ENCODE measurements at regions of chr17 and their contacts with region 1.

Region 1: DNA sequence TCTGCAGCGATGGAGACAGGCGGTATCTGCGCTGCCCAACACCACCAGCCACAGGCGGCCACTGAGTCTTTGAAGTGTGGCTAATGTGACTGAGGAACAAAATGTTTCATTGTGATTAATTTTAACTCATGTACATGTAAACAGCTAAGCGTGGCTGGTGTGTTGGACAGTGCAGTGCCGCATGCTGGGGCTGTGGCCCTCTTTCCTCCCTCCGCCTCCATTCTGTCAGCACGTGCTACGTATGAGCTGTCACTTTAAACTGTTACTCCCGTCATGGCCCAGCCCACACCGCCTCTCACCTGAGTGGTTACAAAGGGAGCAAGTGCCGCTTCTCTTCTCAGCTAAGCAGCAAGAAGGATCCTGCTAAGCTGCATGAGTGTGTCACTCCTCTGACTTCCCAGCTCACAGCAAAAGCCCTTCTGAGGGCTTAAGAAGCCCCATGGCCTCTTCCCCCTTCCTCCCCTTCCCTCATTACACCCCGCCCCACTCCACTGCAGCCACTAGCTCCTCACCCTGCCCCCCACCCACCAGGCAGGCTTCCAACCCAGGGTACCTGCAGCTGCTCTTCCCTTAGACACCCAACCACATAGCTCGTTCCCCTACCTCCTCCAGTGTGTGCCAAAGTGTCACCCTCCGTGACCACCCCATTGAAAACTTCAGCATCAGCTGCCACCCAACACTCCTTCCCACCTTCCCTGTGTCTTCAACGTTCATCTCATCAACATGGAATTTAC is 15.0 kb downstream of the HASPIN start:
- DNase-seq: no peak
- H3K4me3 ChIP-seq: no peak overlapping the region
- H3K27ac ChIP-seq: no peak overlapping the region
- H3K4me1 ChIP-seq: peaks cover 5% of the 10 kb centered on the region
- H3K27me3 ChIP-seq: no peaks in the 10 kb centered on the region
- CTCF ChIP-seq: no peak
- EP300 ChIP-seq: no peak
- POLR2A ChIP-seq: no peak

Region 2: GRCh38 chr17:3802461-3803307 is 64.0 kb after region 1 on chr17:
- intact Hi-C with region 1: loop called in 1 of 4 experiments (anchors 5 kb)
- DNase-seq: peak; percentile 81 to 90 (median 86)
- H3K4me3 ChIP-seq: no peak overlapping the region
- H3K27ac ChIP-seq: peak overlapping the region; percentile 75 to 99
- H3K4me1 ChIP-seq: peaks cover 54% of the 10 kb centered on the region
- H3K27me3 ChIP-seq: no peaks in the 10 kb centered on the region
- CTCF ChIP-seq: peak in 1 of 3 donors; percentile 51
- EP300 ChIP-seq: peak; percentile 52
- POLR2A ChIP-seq: no peak

Region 3: GRCh38 chr17:3845621-3846441 is 107.1 kb after region 1 on chr17 and contains the start of gene NCBP3:
- intact Hi-C with region 1: loop called in 3 of 4 experiments (anchors 5 to 10 kb)
- DNase-seq: peak; percentile 86 to 93 (median 89)
- H3K4me3 ChIP-seq: peak within 1 kb of the TSS; percentile 100
- H3K27ac ChIP-seq: peak within 1 kb of the TSS; percentile 59 to 70
- H3K4me1 ChIP-seq: no peaks in the 10 kb centered on the region
- H3K27me3 ChIP-seq: no peaks in the 10 kb centered on the region
- CTCF ChIP-seq: peak; percentile 97 to 98 (median 98)
- EP300 ChIP-seq: no peak
- POLR2A ChIP-seq: peak; percentile 81
- total RNA-seq, gene NCBP3: 15.7 to 43.2 (median 37.6) TPM

Region 4: GRCh38 chr17:3852561-3852960 is 113.8 kb after region 1 on chr17:
- intact Hi-C with region 1: loop called in 2 of 4 experiments (anchors 5 to 10 kb)
- DNase-seq: no peak
- H3K4me3 ChIP-seq: no peak overlapping the region
- H3K27ac ChIP-seq: no peak overlapping the region
- H3K4me1 ChIP-seq: no peaks in the 10 kb centered on the region
- H3K27me3 ChIP-seq: no peaks in the 10 kb centered on the region
- CTCF ChIP-seq: no peak
- EP300 ChIP-seq: no peak
- POLR2A ChIP-seq: no peak

Region 5: DNA sequence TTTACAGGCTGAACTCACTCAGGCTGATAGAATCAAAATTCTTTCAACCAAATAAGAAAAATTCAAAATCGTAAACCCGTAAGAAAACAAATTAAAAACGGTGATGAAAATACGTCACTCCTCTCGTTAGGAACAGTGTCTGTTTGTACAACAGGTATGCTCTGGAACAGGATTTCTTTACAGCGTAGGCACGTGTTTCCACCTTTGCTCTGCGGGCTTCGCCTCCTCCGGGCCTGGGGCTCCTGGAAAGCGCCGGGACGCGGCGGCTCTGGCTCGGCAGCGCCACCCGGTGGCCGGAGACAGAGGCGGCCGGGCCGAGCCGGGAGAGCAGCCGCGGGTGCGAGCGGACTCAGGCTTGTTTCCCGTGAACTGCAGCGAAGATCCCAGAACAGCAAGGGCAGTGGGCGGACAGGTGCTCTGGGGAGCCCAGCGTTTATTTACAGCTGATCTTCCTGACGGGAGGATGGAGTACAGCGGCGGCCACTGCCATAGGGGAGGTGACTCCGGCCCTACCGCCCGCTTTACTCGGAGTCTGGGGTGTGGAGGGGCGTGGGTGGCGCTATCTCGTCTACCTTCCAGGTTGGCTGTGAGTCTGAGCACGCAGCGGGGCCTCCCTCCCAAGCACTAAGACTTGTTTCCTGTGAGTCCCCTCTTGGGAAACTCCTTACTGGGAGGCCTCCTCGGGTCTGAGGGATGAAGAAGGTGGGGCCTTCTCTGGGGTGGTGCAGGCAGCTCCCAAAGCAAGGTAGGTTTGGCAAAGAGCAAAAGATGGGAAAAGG is 266.0 kb after region 1 on chr17:
- intact Hi-C with region 1: loop called in 2 of 4 experiments (anchors 10 kb)
- DNase-seq: peak in 4 of 5 donors; percentile 49 to 73 (median 56)
- H3K4me3 ChIP-seq: no peak overlapping the region
- H3K27ac ChIP-seq: no peak overlapping the region
- H3K4me1 ChIP-seq: peaks cover 3% of the 10 kb centered on the region
- H3K27me3 ChIP-seq: no peaks in the 10 kb centered on the region
- CTCF ChIP-seq: peak; percentile 61 to 76 (median 69)
- EP300 ChIP-seq: no peak
- POLR2A ChIP-seq: no peak

Region 6: DNA sequence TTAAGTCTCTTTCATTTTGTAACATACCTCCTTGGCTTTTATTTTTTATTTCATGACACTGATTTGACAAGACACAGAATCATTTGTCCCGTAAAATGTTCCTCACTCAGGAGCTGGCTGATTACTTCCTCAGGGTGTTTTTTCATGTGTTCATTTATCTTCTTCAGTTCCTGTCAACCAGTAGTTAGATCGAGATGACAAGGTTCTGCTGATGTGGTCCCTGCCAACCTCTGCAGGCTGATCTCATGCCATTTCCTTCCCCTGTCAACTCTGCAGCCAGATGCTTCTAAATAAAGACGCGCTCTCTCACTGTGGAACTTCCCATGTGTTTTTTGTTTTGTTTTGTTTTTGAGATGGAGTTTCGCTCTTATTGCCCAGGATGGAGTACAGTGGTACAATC is 1009.1 kb after region 1 on chr17:
- intact Hi-C with region 1: no loop called
- DNase-seq: no peak
- H3K4me3 ChIP-seq: no peak overlapping the region
- H3K27ac ChIP-seq: no peak overlapping the region
- H3K4me1 ChIP-seq: no peaks in the 10 kb centered on the region
- H3K27me3 ChIP-seq: no peaks in the 10 kb centered on the region
- CTCF ChIP-seq: no peak
- EP300 ChIP-seq: no peak
- POLR2A ChIP-seq: no peak

Measured in ovary (tissue), 10 donors.